Natural killer cell (primary cell): ENCODE measurements at regions of chr11 and their contacts with region 1.

Region 1: GRCh38 chr11:59680287-59681154 is 11.7 kb upstream of the PATL1 start:
- DNase-seq: peak; percentile 30 to 76
- ATAC-seq: peak; percentile 71 to 90 (median 88)
- H3K4me3 ChIP-seq: no peak overlapping the region
- H3K4me3 Mint-ChIP-seq: no peak overlapping the region
- H3K27ac ChIP-seq: no peak overlapping the region
- H3K27ac Mint-ChIP-seq: no peak overlapping the region
- H3K4me1 ChIP-seq: no peaks in the 10 kb centered on the region
- H3K4me1 Mint-ChIP-seq: no peaks in the 10 kb centered on the region
- H3K27me3 ChIP-seq: peaks cover 4% of the 10 kb centered on the region
- H3K27me3 Mint-ChIP-seq: peaks cover 11 to 22% of the 10 kb centered on the region in 2 donors
- CTCF ChIP-seq: peak; percentile 63

Region 2: DNA sequence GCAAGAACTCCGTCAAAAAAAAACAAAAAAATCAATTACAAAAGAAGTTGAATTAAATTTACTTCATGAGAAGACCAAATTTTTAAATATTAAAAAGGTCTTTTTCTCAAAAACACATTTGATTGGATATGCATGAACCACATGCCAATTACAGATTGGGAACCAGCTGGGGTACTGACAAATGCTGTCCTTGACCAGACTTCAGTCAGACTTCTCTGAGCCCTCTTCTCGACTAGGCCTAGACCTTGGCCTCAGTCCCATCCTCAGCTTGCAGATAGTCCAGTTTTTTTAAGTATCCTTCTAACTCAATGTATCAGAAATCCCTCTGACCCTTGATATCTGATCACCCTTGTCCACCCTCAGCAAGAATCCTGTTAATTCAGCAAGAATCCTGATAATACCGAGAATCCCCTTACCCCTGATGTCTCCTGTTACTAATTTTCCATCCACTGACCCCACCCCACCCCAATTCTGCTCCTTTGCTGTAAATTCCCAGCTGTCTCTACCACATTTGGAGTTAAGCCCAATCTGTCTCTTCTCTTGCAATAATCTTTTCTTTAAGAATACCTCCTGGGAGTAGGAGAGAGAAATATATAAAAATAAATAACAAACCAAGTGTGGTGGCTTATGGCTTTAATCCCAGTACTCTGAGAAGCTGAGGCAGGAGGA is 138.2 kb before region 1 on chr11:
- intact Hi-C with region 1: loop called (anchors 1 kb)
- DNase-seq: no peak
- ATAC-seq: no peak
- H3K4me3 ChIP-seq: no peak overlapping the region
- H3K4me3 Mint-ChIP-seq: no peak overlapping the region
- H3K27ac ChIP-seq: no peak overlapping the region
- H3K27ac Mint-ChIP-seq: no peak overlapping the region
- H3K4me1 ChIP-seq: no peaks in the 10 kb centered on the region
- H3K4me1 Mint-ChIP-seq: peaks cover 5 to 6% of the 10 kb centered on the region in 2 donors
- H3K27me3 ChIP-seq: no peaks in the 10 kb centered on the region
- H3K27me3 Mint-ChIP-seq: peaks cover 6 to 16% of the 10 kb centered on the region in 2 donors
- CTCF ChIP-seq: no peak